Left ventricle myocardium inferior (tissue), 1 donor: ENCODE measurements at regions of chr15 and their contacts with region 1.

Region 1: GRCh38 chr15:48861813-48862431 is 16.0 kb upstream of the EID1 start:
- DNase-seq: no peak
- H3K4me3 ChIP-seq: no peak overlapping the region
- H3K27ac ChIP-seq: no peak overlapping the region
- H3K4me1 ChIP-seq: no peaks in the 10 kb centered on the region
- H3K27me3 ChIP-seq: no peaks in the 10 kb centered on the region
- CTCF ChIP-seq: peak; percentile 94

Region 2: GRCh38 chr15:48645558-48646330 is 216.2 kb before region 1 on chr15 and contains the start of gene FBN1:
- intact Hi-C with region 1: no loop called
- DNase-seq: peak; percentile 71
- H3K4me3 ChIP-seq: peak within 1 kb of the TSS; percentile 97
- H3K27ac ChIP-seq: peak within 1 kb of the TSS; percentile 92
- H3K4me1 ChIP-seq: peaks cover 60% of the 10 kb centered on the region
- H3K27me3 ChIP-seq: peaks cover 29% of the 10 kb centered on the region
- CTCF ChIP-seq: no peak
- total RNA-seq, gene FBN1: 45.5 TPM

Region 3: DNA sequence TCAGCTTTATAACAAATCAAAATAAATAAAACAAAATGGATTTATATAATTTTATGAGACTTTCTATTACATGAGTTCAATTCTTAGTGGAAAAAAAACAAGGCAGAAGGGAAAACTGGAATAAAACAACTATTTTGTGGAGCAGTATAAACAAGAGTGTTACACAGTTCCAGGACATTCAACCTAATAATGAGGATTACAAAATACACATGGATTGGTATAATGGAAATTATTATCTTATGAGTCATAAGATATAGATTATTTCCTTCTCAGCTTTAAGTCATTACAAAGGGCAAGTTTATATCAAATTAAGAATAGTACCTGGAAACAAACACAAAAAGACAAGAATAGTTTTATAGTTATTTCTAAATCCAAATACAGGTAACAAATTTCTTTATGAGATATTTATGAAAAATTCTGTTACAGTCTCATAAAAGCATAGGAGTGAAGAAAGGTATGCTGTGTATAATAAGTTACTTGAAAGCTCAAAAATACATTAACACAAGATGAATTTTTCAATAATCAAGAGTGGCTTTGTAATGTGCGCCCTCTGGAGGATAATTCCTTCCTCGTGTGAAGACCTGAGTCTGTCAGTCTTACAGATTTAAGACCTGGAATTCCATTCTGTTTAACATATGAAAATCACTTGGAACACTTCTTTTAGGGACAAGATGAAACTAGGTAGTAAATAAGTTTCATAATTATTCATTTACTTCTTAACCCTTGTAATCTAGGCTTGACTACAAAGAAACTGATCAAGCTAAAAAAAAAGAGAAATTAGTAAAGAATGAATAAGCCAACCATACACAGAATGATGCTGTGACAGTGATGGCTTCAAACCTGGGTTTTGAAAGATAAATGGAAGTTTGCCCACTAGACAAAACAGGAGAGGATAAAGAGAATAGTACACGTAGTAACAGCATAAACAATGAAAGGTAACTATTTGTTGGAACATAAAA is 284.0 kb after region 1 on chr15:
- intact Hi-C with region 1: loop called (anchors 10 kb)
- DNase-seq: no peak
- H3K4me3 ChIP-seq: no peak overlapping the region
- H3K27ac ChIP-seq: no peak overlapping the region
- H3K4me1 ChIP-seq: peaks cover 63% of the 10 kb centered on the region
- H3K27me3 ChIP-seq: no peaks in the 10 kb centered on the region
- CTCF ChIP-seq: peak; percentile 73

Region 4: GRCh38 chr15:49421991-49422390 is 560.1 kb after region 1 on chr15:
- intact Hi-C with region 1: loop called (anchors 5 kb)
- DNase-seq: peak; percentile 30
- H3K4me3 ChIP-seq: peak overlapping the region; percentile 67
- H3K27ac ChIP-seq: peak overlapping the region; percentile 81
- H3K4me1 ChIP-seq: peaks cover 10% of the 10 kb centered on the region
- H3K27me3 ChIP-seq: no peaks in the 10 kb centered on the region
- CTCF ChIP-seq: peak; percentile 87